BJ (cell line): ENCODE measurements at regions of chr5 and their contacts with region 1.

Region 1: DNA sequence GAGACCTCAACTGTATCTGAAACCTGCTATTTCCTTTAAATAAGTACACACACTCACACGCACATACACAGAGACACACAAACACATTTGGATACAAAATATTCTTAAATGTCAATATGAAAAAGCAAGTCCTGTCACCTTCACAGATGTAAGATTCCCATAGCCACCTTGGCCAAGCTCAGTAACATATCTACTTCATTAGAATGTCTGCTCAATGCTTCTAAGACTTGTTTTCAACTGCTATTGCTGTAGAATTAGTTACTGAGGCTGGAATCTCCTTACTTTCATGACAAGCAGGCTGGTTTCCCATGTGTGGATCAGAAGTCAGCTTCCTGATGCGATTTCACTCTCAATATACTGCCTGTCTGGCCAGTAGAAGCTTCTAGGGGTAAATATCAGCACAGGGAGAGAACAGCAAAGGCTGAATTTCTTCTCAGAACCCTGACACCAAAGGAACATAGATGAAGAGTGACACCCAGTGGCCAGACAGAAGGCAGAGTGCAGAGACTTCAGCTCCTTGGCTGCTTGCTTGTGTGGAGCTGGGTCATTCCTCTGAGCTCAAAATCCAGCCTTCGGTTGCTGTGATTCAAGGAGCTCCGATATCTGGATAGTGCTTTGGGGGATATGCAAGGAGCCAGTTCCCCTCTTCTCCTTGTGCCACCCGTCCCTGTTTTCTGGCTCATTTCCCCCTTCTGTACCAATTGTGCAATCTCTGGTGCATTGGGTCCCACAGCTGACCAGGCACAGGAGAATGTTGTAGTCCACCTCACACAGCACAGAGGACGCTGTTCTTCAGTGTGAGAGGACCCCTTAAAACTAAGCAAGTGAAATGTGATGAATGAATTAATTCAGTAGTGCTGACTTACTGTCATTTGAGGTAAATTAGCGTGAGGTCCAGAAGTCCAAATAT is 26.6 kb upstream of the ABLIM3 start:
- DNase-seq: no peak
- H3K4me3 ChIP-seq: no peak overlapping the region
- H3K27me3 ChIP-seq: no peaks in the 10 kb centered on the region
- CTCF ChIP-seq: peak; percentile 87

Region 2: GRCh38 chr5:148237785-148238184 is 876.9 kb before region 1 on chr5:
- CTCF ChIA-PET with region 1: no interaction called
- POLR2A ChIA-PET with region 1: no interaction called
- DNase-seq: no peak
- H3K4me3 ChIP-seq: no peak overlapping the region
- H3K27me3 ChIP-seq: no peaks in the 10 kb centered on the region
- CTCF ChIP-seq: no peak

Region 3: GRCh38 chr5:148998174-148998797 is 116.4 kb before region 1 on chr5:
- CTCF ChIA-PET with region 1: interaction called, 20 read pairs
- POLR2A ChIA-PET with region 1: no interaction called
- DNase-seq: no peak
- H3K4me3 ChIP-seq: no peak overlapping the region
- H3K27me3 ChIP-seq: no peaks in the 10 kb centered on the region
- CTCF ChIP-seq: peak; percentile 61

Region 4: GRCh38 chr5:149005077-149005892 is 109.4 kb before region 1 on chr5:
- CTCF ChIA-PET with region 1: interaction called, 29 read pairs
- POLR2A ChIA-PET with region 1: interaction called, 3 read pairs
- DNase-seq: peak; percentile 69
- H3K4me3 ChIP-seq: no peak overlapping the region
- H3K27me3 ChIP-seq: no peaks in the 10 kb centered on the region
- CTCF ChIP-seq: no peak

Region 5: DNA sequence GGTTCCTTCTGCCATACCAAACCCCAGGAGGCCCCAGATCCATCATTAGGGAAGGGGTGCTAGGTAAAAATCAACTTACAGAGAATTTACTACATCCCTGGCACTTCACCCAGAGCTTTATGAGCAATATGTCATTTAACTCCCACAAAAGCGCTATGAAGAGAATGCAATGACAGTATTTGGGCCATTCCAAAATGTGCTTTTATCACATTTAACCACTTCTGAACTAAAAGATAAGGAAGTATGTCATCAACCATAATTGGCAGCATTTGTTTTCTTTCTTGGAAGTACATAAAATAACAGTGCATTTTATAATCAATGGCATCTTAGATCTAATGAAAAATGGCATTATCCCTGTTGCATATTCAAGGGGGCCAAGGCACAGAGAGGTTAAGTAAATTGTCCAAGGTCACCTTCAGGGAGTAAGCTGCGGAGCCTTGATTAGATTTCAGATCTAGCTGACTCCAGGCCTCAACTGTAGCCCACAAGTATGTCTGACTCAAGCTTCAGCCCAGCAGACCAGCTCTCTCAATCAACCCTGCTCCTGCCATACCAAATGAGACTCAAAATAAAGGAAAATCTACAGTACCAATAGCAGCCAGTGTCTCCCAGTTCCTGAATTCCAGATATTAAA is 68.3 kb before region 1 on chr5:
- CTCF ChIA-PET with region 1: interaction called, 10 read pairs
- POLR2A ChIA-PET with region 1: no interaction called
- DNase-seq: no peak
- H3K4me3 ChIP-seq: no peak overlapping the region
- H3K27me3 ChIP-seq: no peaks in the 10 kb centered on the region
- CTCF ChIP-seq: no peak

Region 6: GRCh38 chr5:149128023-149128875 is 13.6 kb after region 1 on chr5:
- CTCF ChIA-PET with region 1: interaction called, 45 read pairs
- POLR2A ChIA-PET with region 1: no interaction called
- DNase-seq: no peak
- H3K4me3 ChIP-seq: no peak overlapping the region
- H3K27me3 ChIP-seq: no peaks in the 10 kb centered on the region
- CTCF ChIP-seq: peak; percentile 94

Region 7: GRCh38 chr5:149228618-149229297 is 114.1 kb after region 1 on chr5:
- CTCF ChIA-PET with region 1: interaction called, 32 read pairs
- POLR2A ChIA-PET with region 1: no interaction called
- DNase-seq: peak; percentile 52
- H3K4me3 ChIP-seq: no peak overlapping the region
- H3K27me3 ChIP-seq: no peaks in the 10 kb centered on the region
- CTCF ChIP-seq: peak; percentile 83